PC-9 (cell line): ENCODE measurements at regions of chr17 and their contacts with region 1.

Region 1: DNA sequence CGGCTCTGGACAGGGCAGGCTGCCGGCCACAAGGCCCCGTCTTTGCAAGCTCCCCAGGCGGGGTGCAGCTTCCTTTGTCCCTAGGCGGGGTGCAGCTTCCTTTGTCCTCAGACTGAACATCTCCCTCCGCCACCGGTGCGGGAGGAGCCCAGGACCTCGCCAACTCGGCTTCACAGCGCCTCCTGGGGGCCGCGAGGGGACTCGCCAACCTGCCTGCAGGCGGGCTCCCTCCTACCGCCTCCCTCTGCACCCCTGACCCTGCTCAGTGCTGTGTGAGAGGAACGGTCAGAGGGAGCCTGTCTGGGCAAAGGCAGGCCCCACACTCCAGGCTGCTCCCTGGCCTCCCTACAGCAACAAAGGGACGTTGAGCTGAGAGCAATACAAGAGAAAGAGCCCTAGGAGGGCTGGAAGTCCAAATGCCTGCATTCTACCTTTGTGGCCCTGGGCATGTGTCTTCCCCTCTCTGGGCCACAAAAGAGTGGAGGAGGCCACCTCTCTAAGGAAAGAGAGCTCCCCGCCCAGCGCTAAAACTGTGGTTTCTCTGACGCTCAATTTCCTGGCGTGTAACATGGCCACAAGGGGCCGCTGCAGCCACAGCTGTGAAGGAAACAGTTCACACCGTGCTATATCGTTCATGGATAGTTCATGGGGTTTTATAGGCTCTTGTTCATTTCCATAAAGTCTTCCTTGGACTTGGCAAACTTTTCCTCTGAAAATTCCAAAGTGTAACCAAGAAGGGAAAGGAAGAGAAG is 20.9 kb upstream of the KRT19 start:
- DNase-seq: peak; percentile 85 to 92
- H3K4me3 ChIP-seq: peak overlapping the region; percentile 53; the same call in 1 of the 2 replicates
- H3K27ac ChIP-seq: peak overlapping the region; percentile 93
- H3K4me1 ChIP-seq: peaks cover 69% of the 10 kb centered on the region
- H3K27me3 ChIP-seq: no peaks in the 10 kb centered on the region
- CTCF ChIP-seq: peak; percentile 94

Region 2: GRCh38 chr17:40803617-40804082 is 745.4 kb before region 1 on chr17:
- CTCF ChIA-PET with region 1: no interaction called
- POLR2A ChIA-PET with region 1: interaction called, 6 read pairs
- intact Hi-C with region 1: loop called (anchors 1 kb)
- DNase-seq: peak; percentile 74 to 82
- H3K4me3 ChIP-seq: no peak overlapping the region
- H3K27ac ChIP-seq: 0 out of 2 replicates have a peak overlapping the region, but pooled peaks have one; percentile 18
- H3K4me1 ChIP-seq: peaks cover 9% of the 10 kb centered on the region
- H3K27me3 ChIP-seq: no peaks in the 10 kb centered on the region
- CTCF ChIP-seq: peak; percentile 94

Region 3: GRCh38 chr17:41060052-41060604 is 488.9 kb before region 1 on chr17 and contains the start of gene KRTAP2-3:
- CTCF ChIA-PET with region 1: no interaction called
- POLR2A ChIA-PET with region 1: no interaction called
- intact Hi-C with region 1: loop called (anchors 10 kb)
- DNase-seq: peak; percentile 64 to 93
- H3K4me3 ChIP-seq: no peak within 1 kb of the TSS
- H3K27ac ChIP-seq: peak within 1 kb of the TSS; percentile 88
- H3K4me1 ChIP-seq: peaks cover 47% of the 10 kb centered on the region
- H3K27me3 ChIP-seq: no peaks in the 10 kb centered on the region
- CTCF ChIP-seq: no peak
- total RNA-seq, gene KRTAP2-3: 0.57 TPM in 1 of 2 replicates, not detected in the other

Region 4: GRCh38 chr17:41417576-41418015 is 131.4 kb before region 1 on chr17:
- CTCF ChIA-PET with region 1: interaction called, 13 read pairs
- POLR2A ChIA-PET with region 1: no interaction called
- intact Hi-C with region 1: no loop called
- DNase-seq: peak; percentile 69 to 98
- H3K4me3 ChIP-seq: no peak overlapping the region
- H3K27ac ChIP-seq: peak overlapping the region; percentile 89
- H3K4me1 ChIP-seq: peaks cover 76% of the 10 kb centered on the region
- H3K27me3 ChIP-seq: no peaks in the 10 kb centered on the region
- CTCF ChIP-seq: peak; percentile 82

Region 5: GRCh38 chr17:41521574-41522261 is 27.3 kb before region 1 on chr17:
- CTCF ChIA-PET with region 1: interaction called, 51 read pairs
- POLR2A ChIA-PET with region 1: interaction called, 39 read pairs
- intact Hi-C with region 1: loop called (anchors 1 kb)
- DNase-seq: peak; percentile 97 to 98
- H3K4me3 ChIP-seq: peak overlapping the region; percentile 93; the same call in 1 of the 2 replicates
- H3K27ac ChIP-seq: peak overlapping the region; percentile 95
- H3K4me1 ChIP-seq: peaks cover 81% of the 10 kb centered on the region
- H3K27me3 ChIP-seq: no peaks in the 10 kb centered on the region
- CTCF ChIP-seq: no peak

Region 6: DNA sequence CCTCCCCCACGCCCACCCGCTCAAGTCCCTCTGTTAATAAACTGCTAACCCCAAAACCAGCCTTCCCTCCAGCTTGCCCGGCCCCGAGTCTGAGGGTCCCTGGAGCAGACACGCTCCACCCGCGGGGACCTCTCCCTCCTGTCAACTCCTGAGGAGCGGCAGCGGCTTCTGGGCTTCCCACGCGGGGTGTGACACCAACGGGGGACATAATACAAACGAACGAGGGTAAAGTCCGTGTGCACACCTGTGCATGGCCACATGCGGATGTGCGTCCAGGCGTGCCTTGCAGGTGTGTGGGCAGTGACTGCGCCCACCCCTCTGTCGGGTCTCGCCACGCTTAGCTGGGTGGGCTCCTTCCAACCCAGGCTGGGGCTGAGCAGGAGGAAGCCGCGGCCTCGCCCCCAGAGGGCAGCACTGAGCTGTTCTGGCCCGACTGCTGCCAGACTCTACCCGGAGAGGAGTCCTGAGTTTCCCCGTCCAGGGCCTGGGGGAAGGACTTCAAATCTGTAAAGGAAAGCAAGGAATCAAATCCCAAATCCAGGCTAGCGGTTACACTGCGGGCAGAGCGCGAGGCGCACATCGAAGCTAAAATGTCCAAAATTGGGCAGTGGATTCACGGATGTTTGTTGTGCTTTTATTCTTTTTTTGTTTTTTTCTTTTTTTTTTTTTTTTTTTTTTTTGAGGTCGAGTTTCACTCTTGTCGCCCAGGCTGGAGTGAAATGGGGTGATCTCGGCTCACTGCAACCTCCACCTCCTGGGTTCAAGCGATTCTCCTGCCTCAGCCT is 99.6 kb after region 1 on chr17:
- CTCF ChIA-PET with region 1: interaction called, 47 read pairs
- POLR2A ChIA-PET with region 1: interaction called, 5 read pairs
- intact Hi-C with region 1: loop called (anchors 1 kb)
- DNase-seq: peak; percentile 66 to 85
- H3K4me3 ChIP-seq: peak overlapping the region; percentile 46
- H3K27ac ChIP-seq: peak overlapping the region; percentile 68
- H3K4me1 ChIP-seq: peaks cover 58% of the 10 kb centered on the region
- H3K27me3 ChIP-seq: no peaks in the 10 kb centered on the region
- CTCF ChIP-seq: peak; percentile 93